Posterior cingulate gyrus (tissue), 11 donors: ENCODE measurements at regions of chr10 and their contacts with region 1.

Region 1: DNA sequence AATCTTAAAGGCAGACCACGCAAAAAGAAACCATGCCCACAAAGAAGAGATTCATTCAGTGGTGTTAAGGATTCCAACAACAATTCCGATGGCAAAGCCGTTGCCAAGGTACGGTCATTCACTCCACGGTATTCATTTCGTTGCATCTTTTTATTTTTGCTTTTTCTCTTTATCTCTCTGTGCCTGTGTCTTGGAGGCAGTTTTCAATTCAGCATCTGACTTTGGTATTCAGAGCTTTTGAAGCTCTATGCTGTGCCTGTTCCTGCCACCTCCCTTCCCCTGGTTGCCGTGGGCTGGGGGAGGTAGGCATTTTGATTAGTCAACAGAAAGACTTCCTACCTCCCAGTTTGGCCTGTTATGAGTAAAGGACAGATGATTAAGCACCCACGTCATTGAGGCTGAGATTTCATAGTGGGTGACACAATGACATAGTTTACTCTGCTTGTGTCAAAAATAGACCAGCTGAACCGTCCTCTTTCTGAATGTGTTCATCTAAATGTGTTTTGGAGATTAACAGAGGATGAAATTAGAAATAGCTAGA is 149.5 kb downstream of the ARID5B start:
- DNase-seq: peak in 2 of 10 donors; percentile 32 to 83

Region 2: GRCh38 chr10:62011558-62011957 is 39.4 kb before region 1 on chr10:
- intact Hi-C with region 1: no loop called
- DNase-seq: no peak

Region 3: GRCh38 chr10:62093863-62094291 is 42.9 kb after region 1 on chr10:
- intact Hi-C with region 1: loop called (anchors 5 kb)
- DNase-seq: no peak